ENCODE measurements at regions of chr3 and their contacts with region 1.

Region 1: DNA sequence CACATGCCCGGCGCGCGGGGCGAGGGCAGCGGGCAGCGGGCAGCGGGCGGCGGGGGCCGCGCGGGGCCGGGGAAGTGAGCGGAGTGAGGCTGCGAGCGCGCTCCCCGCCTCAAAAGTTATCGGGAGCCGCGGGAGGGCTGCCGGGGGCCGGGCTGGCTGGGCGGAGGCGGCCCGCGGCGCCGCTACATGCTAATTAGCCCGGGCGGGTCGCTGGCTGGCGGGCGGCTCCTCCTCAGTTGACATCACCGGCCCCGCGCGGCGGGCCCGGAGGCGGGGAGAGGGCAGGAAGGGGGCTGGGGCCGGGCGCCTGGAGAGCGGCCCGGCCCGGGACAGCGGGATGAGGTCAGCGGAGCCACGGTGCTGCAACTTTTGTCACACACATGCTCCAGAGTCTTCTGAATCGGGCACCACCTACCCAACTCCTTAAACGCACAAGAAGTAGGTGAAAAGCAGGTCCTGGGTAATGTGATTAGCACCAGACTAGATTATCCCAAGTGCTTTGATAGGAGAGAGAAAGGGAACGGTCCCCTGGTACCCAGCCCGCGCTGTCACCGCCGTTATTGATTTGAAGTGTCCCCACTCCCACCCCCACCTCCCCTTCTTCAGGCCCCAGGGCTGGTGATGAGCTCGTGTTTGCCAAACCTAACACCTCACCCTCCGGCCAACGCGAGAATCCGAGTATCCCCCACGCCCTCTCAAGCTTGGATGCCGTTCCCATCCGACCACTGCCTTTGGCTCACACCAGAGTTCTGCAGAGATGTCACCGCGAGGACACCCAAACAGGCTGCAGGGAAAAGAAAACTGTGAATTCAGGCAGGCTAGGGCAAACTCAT is at the start of gene HEG1:
- DNase-seq: peak; percentile 93
- ATAC-seq: peak; percentile 94
- H3K4me3 ChIP-seq: peak within 1 kb of the TSS; percentile 84
- H3K27ac ChIP-seq: peak within 1 kb of the TSS; percentile 89
- H3K4me1 ChIP-seq: peaks cover 52% of the 10 kb centered on the region
- H3K27me3 ChIP-seq: no peaks in the 10 kb centered on the region
- CTCF ChIP-seq: no peak
- total RNA-seq, gene HEG1: 234 TPM

Region 2: DNA sequence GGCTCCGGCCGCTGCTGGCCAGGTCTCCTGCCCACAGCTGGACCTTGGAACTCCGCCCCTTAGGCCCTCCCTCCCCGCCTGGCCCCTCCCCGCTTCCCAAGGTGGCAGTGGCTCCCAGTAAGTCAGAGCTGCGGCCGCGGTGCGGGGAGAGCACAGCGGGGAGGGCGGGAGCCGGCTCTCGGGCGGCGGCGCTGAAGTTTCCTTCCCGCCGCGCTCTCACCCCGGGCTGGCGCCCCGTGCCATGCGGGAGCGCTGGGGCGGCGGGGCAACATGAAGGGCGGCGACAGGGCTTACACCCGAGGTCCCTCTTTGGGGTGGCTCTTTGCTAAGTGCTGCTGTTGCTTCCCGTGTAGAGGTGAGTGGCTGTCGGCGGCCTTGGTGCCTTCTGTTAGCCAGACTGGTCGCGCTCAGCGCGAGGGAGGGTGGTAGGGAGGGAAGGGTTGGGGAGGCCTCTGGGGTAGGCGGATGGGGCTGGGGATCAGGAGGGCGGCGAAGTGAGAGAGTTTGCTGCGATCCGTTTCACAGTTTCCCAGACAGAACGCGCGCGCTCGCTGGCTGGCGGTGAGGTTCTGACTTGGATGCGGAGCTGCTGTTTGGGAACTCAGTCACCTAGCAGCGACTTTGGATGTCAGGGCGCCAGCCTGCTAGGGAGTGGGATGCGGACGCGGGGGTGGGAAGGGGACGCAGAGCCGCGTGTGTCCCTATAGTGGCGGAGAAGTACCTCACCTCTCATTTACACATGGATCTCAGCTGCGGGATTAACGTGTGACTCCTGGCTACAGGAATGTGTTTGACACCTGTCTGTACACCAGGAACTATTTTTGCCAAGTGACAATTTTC is 471.4 kb before region 1 on chr3:
- intact Hi-C with region 1: no loop called
- DNase-seq: peak; percentile 91
- ATAC-seq: peak; percentile 94
- H3K4me3 ChIP-seq: peak overlapping the region; percentile 51
- H3K27ac ChIP-seq: no peak overlapping the region
- H3K4me1 ChIP-seq: peaks cover 9% of the 10 kb centered on the region
- H3K27me3 ChIP-seq: no peaks in the 10 kb centered on the region
- CTCF ChIP-seq: no peak

Region 3: GRCh38 chr3:125141596-125142419 is 85.7 kb after region 1 on chr3:
- intact Hi-C with region 1: loop called (anchors 10 kb)
- DNase-seq: peak; percentile 85
- ATAC-seq: peak; percentile 87
- H3K4me3 ChIP-seq: peak overlapping the region; percentile 41
- H3K27ac ChIP-seq: peak overlapping the region; percentile 70
- H3K4me1 ChIP-seq: peaks cover 48% of the 10 kb centered on the region
- H3K27me3 ChIP-seq: no peaks in the 10 kb centered on the region
- CTCF ChIP-seq: peak; percentile 43

Measured in upper lobe of right lung (tissue), 1 donor.